ENCODE measurements at regions of chr6 and their contacts with region 1.

Region 1: DNA sequence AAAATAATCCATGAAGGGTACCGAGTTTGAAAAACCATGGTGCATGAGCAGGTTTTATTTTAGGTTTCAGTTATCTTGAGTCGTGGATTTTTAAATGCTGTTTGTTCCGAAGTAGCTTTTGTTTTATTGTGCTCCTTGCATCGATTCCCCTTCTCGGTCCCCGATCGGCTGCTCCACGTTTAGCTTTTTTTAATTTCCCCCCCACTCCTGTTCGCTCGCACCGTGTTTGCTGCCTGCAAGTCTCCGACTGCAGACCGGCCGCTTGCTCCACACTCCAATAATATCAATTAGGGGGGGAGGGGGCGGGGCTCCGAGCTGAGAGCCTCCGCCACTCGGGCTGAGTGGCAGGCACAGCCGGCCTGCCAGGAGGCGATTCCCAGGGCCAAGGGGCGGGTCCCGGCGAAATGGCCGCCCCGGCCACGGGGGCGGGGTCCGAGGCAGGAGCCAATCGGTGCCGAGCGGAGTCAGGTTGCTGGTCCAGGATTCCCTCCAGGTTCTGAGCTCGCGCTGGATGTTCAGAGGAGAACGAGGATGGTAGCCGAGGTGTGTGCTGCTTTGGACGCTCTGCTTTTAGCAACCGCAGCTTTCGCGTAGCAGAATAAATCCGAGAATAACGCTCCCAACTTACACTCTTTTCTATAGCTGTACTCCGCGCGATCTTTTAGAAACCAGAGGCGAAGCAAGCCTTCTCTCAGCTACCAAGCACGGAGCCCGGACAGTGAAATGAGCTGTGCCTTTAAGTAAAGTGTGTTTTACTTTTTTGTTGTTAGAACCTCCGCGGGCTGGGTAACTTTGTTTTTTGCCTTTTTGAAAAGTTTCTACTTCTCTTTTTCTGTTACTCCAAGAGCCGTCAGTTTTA is at the start of gene EPHA7:
- DNase-seq: peak; percentile 94

Region 2: DNA sequence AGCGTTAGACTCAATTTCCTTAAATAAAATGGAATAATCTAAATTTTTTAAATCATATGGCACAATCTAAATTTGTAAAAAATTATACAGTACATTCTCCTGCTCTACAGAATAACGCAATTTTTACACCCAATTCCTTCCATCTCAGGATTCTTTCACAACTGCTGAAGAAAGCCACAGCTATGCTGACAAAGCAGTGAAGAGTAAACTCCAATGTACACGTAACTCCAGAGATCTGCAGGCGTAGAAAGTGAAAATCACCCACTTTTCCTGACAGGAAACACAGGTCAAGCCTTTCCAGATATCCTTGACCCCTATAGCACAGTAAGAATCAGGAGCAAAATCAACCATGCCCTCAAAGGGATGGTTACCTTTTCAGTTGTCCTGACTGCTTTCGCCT is 27.6 kb before region 1 on chr6:
- CTCF ChIA-PET with region 1: interaction called, 6 read pairs
- POLR2A ChIA-PET with region 1: interaction called, 33 read pairs
- DNase-seq: no peak

Region 3: GRCh38 chr6:93437491-93437890 is 18.0 kb after region 1 on chr6:
- CTCF ChIA-PET with region 1: no interaction called
- POLR2A ChIA-PET with region 1: no interaction called
- DNase-seq: no peak

Region 4: DNA sequence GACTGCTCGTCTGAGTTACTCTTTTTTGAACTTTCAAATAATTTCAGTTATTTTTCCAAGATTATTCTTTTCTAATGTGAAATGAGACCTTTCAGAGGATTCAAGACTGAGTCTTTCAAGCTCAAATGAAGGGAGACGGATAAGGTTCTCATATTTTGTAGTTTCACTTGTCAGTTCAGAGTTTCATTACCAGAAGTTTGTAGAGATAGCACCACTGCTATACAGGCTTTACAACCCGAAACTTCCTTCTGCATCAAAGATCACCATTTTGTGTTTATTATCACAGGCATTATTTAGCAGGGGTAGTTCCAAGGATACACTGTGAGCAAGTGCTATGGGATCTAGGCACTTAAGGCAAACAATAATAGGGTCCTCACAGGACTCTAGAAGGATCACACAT is 74.5 kb after region 1 on chr6:
- CTCF ChIA-PET with region 1: no interaction called
- POLR2A ChIA-PET with region 1: no interaction called
- DNase-seq: no peak

Region 5: DNA sequence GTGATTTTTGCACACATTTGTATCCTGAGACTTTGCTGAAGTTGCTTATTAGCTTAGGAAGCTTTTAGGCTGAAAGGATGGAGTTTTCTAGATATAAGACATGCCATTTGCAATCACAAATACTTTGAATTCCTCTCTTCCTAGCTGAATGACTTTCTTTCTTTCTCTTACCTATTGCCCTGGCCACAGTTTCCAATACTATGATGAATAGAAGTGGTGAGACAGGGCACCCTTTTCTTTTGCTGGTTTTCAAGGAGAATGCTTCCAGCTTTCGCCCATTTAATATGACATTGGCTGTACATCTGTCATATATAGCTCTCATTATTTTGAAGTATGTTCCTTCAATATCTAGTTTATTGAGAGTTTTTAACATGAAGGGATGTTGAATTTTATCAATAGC is 409.5 kb after region 1 on chr6:
- CTCF ChIA-PET with region 1: no interaction called
- POLR2A ChIA-PET with region 1: no interaction called
- DNase-seq: no peak

Measured in HEK293T (cell line).